Calu3 (cell line): ENCODE measurements at regions of chr2 and their contacts with region 1.

Region 1: GRCh38 chr2:152407204-152407721 is 72.3 kb downstream of the FMNL2 start:
- DNase-seq: peak; percentile 50
- H3K4me3 Mint-ChIP-seq: peak overlapping the region; percentile 68
- H3K27ac Mint-ChIP-seq: peak overlapping the region; percentile 78
- H3K4me1 Mint-ChIP-seq: peaks cover 87% of the 10 kb centered on the region
- H3K27me3 Mint-ChIP-seq: no peaks in the 10 kb centered on the region
- CTCF ChIP-seq: no peak

Region 2: GRCh38 chr2:152505495-152505906 is 98.2 kb after region 1 on chr2:
- CTCF ChIA-PET with region 1: no interaction called
- intact Hi-C with region 1: loop called (anchors 5 kb)
- DNase-seq: peak; percentile 30
- H3K4me3 Mint-ChIP-seq: peak overlapping the region; percentile 45
- H3K27ac Mint-ChIP-seq: peak overlapping the region; percentile 91
- H3K4me1 Mint-ChIP-seq: peaks cover 70% of the 10 kb centered on the region
- H3K27me3 Mint-ChIP-seq: no peaks in the 10 kb centered on the region
- CTCF ChIP-seq: no peak

Region 3: DNA sequence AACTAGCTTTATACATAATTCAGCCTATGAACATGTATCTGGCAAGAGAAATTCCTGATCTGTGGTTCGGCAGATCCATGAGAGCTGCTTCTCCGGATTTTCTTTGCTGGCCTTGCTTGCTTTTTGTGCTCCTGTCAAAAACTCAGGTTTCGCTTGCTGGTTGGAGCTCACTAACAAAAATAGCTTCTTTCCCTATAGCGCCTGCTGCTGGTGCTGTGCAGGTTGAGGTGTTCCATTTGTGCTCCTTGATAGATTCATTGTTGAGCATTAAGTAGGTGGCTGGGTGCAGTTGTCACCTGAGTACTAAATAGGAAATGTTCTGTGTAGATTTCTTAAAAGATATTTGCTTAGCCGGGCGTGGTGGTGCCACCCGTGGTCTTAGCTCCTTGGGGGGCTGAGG is 161.9 kb after region 1 on chr2:
- CTCF ChIA-PET with region 1: interaction called, 10 read pairs
- intact Hi-C with region 1: no loop called
- DNase-seq: no peak
- H3K4me3 Mint-ChIP-seq: no peak overlapping the region
- H3K27ac Mint-ChIP-seq: no peak overlapping the region
- H3K4me1 Mint-ChIP-seq: no peaks in the 10 kb centered on the region
- H3K27me3 Mint-ChIP-seq: no peaks in the 10 kb centered on the region
- CTCF ChIP-seq: no peak

Region 4: DNA sequence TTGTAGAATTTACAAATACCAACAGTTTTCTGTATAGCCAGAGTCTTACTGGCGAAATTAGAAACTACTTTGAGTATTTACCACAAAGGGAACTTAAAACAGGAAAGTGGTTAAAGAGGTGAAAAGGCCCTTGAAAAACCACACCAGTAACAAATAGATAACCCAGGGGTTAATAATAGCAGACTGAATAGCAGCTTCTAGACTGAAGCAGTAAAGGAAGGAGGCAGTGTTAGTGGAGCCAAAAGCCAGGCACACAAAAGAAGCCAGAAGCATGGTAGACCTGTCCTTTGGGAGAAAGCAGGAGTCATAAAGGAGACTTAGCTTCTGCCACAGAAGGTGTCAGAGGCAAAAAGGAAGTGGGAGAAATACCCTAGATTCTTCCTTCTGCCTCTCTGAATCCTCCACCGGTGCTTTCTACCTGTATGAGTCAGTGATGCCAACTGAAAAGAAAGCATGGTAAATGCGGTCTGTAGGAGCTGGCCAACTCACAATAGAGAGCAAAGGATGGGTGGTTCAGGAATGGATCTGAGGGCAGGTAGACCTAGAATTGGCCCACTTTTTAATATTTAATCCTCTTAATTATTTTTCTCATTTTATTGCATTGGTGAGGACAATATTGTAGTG is 408.5 kb after region 1 on chr2:
- CTCF ChIA-PET with region 1: no interaction called
- intact Hi-C with region 1: no loop called
- DNase-seq: no peak
- H3K4me3 Mint-ChIP-seq: no peak overlapping the region
- H3K27ac Mint-ChIP-seq: no peak overlapping the region
- H3K4me1 Mint-ChIP-seq: peaks cover 9% of the 10 kb centered on the region
- H3K27me3 Mint-ChIP-seq: no peaks in the 10 kb centered on the region
- CTCF ChIP-seq: no peak